OCI-LY7 (cell line): ENCODE measurements at regions of chr1 and their contacts with region 1.

Region 1: DNA sequence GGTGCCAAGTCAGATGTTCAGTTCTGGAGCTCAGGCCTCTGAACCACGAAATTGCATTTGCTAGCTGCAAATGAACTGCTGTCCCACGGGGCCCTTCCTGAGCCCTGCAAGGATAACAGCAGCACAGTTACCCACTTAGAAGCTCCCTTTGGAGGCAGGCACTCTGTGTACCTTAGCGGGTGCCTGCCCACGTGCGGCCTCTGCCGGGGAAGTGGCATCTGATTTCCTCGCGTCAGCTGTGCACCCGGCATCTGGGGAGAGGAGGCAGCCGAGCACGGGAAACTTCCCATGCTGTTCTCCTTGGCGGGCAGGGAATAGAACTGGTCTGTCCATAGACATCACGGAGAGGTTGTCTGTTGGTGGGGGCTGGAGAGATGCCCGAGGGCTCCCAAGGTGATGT is 148.0 kb upstream of the C1orf174 start:
- DNase-seq: peak; percentile 78
- H3K4me3 ChIP-seq: peak overlapping the region; percentile 68
- H3K27ac ChIP-seq: peak overlapping the region; percentile 98
- H3K4me1 ChIP-seq: peaks cover 68% of the 10 kb centered on the region
- CTCF ChIP-seq: peak; percentile 69

Region 2: GRCh38 chr1:3900119-3900968 is 147.7 kb before region 1 on chr1 and contains the start of gene C1orf174:
- CTCF ChIA-PET with region 1: interaction called, 9 read pairs
- POLR2A ChIA-PET with region 1: interaction called, 31 read pairs
- intact Hi-C with region 1: loop called (anchors 2 kb)
- DNase-seq: peak; percentile 99
- H3K4me3 ChIP-seq: peak within 1 kb of the TSS; percentile 96
- H3K27ac ChIP-seq: peak within 1 kb of the TSS; percentile 100
- H3K4me1 ChIP-seq: peaks cover 54% of the 10 kb centered on the region
- CTCF ChIP-seq: no peak
- total RNA-seq, gene C1orf174: 43.4 and 59.5 TPM in 2 replicates

Region 3: GRCh38 chr1:4027492-4028138 is 20.5 kb before region 1 on chr1:
- CTCF ChIA-PET with region 1: interaction called, 11 read pairs
- POLR2A ChIA-PET with region 1: interaction called, 90 read pairs
- intact Hi-C with region 1: loop called (anchors 1 kb)
- DNase-seq: peak; percentile 96
- H3K4me3 ChIP-seq: peak overlapping the region; percentile 55
- H3K27ac ChIP-seq: peak overlapping the region; percentile 96
- H3K4me1 ChIP-seq: peaks cover 75% of the 10 kb centered on the region
- CTCF ChIP-seq: no peak

Region 4: GRCh38 chr1:4063516-4063915 is 15.4 kb after region 1 on chr1:
- CTCF ChIA-PET with region 1: no interaction called
- POLR2A ChIA-PET with region 1: no interaction called
- intact Hi-C with region 1: no loop called
- DNase-seq: no peak
- H3K4me3 ChIP-seq: no peak overlapping the region
- H3K27ac ChIP-seq: no peak overlapping the region
- H3K4me1 ChIP-seq: peaks cover 8% of the 10 kb centered on the region
- CTCF ChIP-seq: no peak

Region 5: GRCh38 chr1:4083231-4084047 is 35.4 kb after region 1 on chr1:
- CTCF ChIA-PET with region 1: no interaction called
- POLR2A ChIA-PET with region 1: no interaction called
- intact Hi-C with region 1: no loop called
- DNase-seq: no peak
- H3K4me3 ChIP-seq: no peak overlapping the region
- H3K27ac ChIP-seq: no peak overlapping the region
- H3K4me1 ChIP-seq: no peaks in the 10 kb centered on the region
- CTCF ChIP-seq: no peak

Region 6: GRCh38 chr1:4172644-4173599 is 124.8 kb after region 1 on chr1:
- CTCF ChIA-PET with region 1: no interaction called
- POLR2A ChIA-PET with region 1: no interaction called
- intact Hi-C with region 1: loop called (anchors 5 kb)
- DNase-seq: peak; percentile 84
- H3K4me3 ChIP-seq: no peak overlapping the region
- H3K27ac ChIP-seq: no peak overlapping the region
- H3K4me1 ChIP-seq: peaks cover 23% of the 10 kb centered on the region
- CTCF ChIP-seq: peak; percentile 80